Activated CD8-positive, alpha-beta T cell treated with anti-CD3 and anti-CD28 coated beads for 36 hours (primary cell): ENCODE measurements at regions of chr22 and their contacts with region 1.

Region 1: GRCh38 chr22:42856865-42857704 is at the start of gene ARFGAP3:
- DNase-seq: peak; percentile 96
- ATAC-seq: peak; percentile 95
- H3K4me3 Mint-ChIP-seq: peak within 1 kb of the TSS; percentile 85
- H3K27ac Mint-ChIP-seq: peak within 1 kb of the TSS; percentile 90
- H3K4me1 Mint-ChIP-seq: peaks cover 8% of the 10 kb centered on the region
- H3K27me3 Mint-ChIP-seq: no peaks in the 10 kb centered on the region
- CTCF ChIP-seq: no peak
- total RNA-seq, gene ARFGAP3: 27.1 to 27.2 TPM

Region 2: DNA sequence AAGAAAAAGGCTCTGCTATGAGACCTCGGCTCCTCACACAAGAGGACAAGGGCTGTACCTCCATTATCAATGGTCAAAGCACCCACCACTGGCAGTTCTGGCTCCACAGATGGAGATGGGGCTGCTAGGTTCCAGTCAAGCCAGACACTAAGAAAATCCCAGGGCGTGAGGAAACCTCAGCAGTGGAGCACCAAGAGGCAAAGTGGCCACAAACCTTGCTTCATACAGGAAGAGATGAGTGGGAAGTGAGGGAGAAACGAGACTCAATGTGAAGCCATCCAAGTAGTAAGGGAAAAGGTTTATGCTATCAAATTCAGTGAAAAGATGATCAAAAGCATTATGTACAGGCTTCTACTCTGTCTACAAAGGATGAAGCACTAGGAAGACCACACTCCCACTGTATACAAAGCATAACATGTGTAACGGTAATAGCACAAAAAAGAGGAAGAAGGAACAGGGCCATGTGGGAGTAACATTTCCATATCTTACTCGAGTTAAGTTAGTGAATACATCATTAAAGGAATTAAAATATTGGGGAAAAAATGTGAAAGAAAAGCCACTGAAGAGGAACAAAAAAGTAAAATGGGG is 269.4 kb before region 1 on chr22:
- CTCF ChIA-PET with region 1: no interaction called
- POLR2A ChIA-PET with region 1: no interaction called
- intact Hi-C with region 1: no loop called
- DNase-seq: no peak
- ATAC-seq: no peak
- H3K4me3 Mint-ChIP-seq: no peak overlapping the region
- H3K27ac Mint-ChIP-seq: no peak overlapping the region
- H3K4me1 Mint-ChIP-seq: no peaks in the 10 kb centered on the region
- H3K27me3 Mint-ChIP-seq: no peaks in the 10 kb centered on the region
- CTCF ChIP-seq: no peak

Region 3: GRCh38 chr22:42780070-42780540 is 77.0 kb before region 1 on chr22:
- CTCF ChIA-PET with region 1: interaction called, 4 read pairs
- POLR2A ChIA-PET with region 1: no interaction called
- intact Hi-C with region 1: loop called (anchors 10 kb)
- DNase-seq: peak; percentile 69
- ATAC-seq: peak; percentile 68
- H3K4me3 Mint-ChIP-seq: no peak overlapping the region
- H3K27ac Mint-ChIP-seq: no peak overlapping the region
- H3K4me1 Mint-ChIP-seq: no peaks in the 10 kb centered on the region
- H3K27me3 Mint-ChIP-seq: no peaks in the 10 kb centered on the region
- CTCF ChIP-seq: peak; percentile 74

Region 4: DNA sequence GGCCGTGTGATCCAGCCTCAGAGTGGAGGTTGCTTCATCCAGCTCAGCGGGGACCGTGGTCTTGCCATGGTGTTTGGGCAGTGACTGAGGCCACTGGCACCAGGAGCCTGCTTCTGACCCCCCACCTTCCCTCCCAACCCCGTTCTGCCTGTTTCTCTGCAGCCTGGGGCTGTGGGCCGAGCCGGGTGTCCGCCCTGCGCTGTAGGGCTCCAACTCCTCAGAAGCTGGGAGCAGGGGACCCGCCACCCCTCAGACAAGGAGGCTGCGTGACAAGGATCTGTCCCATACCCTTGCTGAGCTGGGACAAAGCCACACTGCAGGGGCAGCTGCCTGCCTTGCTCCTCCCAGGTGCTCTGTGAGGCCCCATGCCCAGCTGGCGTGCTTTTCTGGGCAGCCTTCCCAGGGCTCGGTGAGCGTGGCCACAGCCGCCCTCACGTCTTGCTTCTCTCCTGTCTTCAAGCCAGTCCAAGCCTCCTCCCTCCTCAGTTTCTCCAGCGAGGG is 11.7 kb after region 1 on chr22:
- CTCF ChIA-PET with region 1: interaction called, 26 read pairs
- POLR2A ChIA-PET with region 1: no interaction called
- intact Hi-C with region 1: no loop called
- DNase-seq: no peak
- ATAC-seq: no peak
- H3K4me3 Mint-ChIP-seq: no peak overlapping the region
- H3K27ac Mint-ChIP-seq: no peak overlapping the region
- H3K4me1 Mint-ChIP-seq: peaks cover 12% of the 10 kb centered on the region
- H3K27me3 Mint-ChIP-seq: no peaks in the 10 kb centered on the region
- CTCF ChIP-seq: no peak

Region 5: DNA sequence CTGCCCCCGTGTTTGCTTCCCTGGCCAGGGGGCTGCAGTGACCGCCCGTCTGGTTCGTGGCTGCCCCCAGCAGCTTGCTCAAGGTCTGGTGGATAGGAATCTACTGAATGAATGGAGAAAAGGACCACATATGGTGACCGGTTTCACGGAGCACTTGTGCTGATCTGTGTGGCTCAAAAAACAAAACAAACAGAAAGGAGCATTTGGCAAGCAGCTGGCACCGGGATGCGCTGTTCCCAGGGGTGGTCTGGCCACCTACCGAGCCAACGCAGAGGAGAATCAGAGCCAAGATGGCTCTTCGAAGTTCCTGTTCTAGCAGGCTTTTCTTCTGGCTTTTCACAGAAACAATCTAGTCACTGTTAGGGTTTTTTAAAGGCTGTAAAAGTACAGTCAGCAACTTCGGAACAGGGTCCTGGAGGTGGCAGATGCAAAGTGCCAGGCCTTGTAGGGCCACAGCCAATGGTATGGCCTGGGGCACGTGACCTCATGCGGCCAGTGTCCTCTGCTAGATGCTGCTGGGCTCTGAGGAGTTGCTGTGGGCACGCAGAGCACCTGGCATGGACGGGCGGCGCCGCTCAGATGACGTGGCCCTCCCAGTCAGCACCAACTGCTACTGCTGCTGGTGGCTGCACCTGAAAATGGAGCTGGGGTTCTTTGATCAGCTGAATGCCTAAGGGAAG is 185.2 kb after region 1 on chr22:
- CTCF ChIA-PET with region 1: no interaction called
- POLR2A ChIA-PET with region 1: no interaction called
- intact Hi-C with region 1: no loop called
- DNase-seq: no peak
- ATAC-seq: no peak
- H3K4me3 Mint-ChIP-seq: no peak overlapping the region
- H3K27ac Mint-ChIP-seq: no peak overlapping the region
- H3K4me1 Mint-ChIP-seq: no peaks in the 10 kb centered on the region
- H3K27me3 Mint-ChIP-seq: no peaks in the 10 kb centered on the region
- CTCF ChIP-seq: no peak